ENCODE measurements at regions of chr9 and their contacts with region 1.

Region 1: GRCh38 chr9:114291064-114291474 is 31.8 kb upstream of the ORM1 start:
- DNase-seq: peak; percentile 50
- H3K4me3 ChIP-seq: no peak overlapping the region
- H3K27ac ChIP-seq: no peak overlapping the region
- H3K4me1 ChIP-seq: peaks cover 20% of the 10 kb centered on the region
- H3K27me3 ChIP-seq: no peaks in the 10 kb centered on the region
- CTCF ChIP-seq: peak; percentile 82 to 84

Region 2: GRCh38 chr9:114238891-114239875 is 51.9 kb before region 1 on chr9:
- CTCF ChIA-PET with region 1: no interaction called
- dilution Hi-C with region 1: no loop called
- in situ Hi-C with region 1: no loop called
- intact Hi-C with region 1: loop called (anchors 2 kb)
- DNase-seq: no peak
- H3K4me3 ChIP-seq: no peak overlapping the region
- H3K27ac ChIP-seq: no peak overlapping the region
- H3K4me1 ChIP-seq: no peaks in the 10 kb centered on the region
- H3K27me3 ChIP-seq: no peaks in the 10 kb centered on the region
- CTCF ChIP-seq: peak in 1 of 2 donors; percentile 29

Region 3: GRCh38 chr9:114271641-114272081 is 19.4 kb before region 1 on chr9:
- CTCF ChIA-PET with region 1: no interaction called
- dilution Hi-C with region 1: no loop called
- in situ Hi-C with region 1: no loop called
- intact Hi-C with region 1: loop called (anchors 2 kb)
- DNase-seq: no peak
- H3K4me3 ChIP-seq: no peak overlapping the region
- H3K27ac ChIP-seq: no peak overlapping the region
- H3K4me1 ChIP-seq: peaks cover 29% of the 10 kb centered on the region
- H3K27me3 ChIP-seq: no peaks in the 10 kb centered on the region
- CTCF ChIP-seq: peak in 1 of 2 donors; percentile 33

Measured in mammary epithelial cell (primary cell).